Cardiac septum (tissue), 1 donor: ENCODE measurements at regions of chr11 and their contacts with region 1.

Region 1: GRCh38 chr11:67265633-67266423 is 445 bp upstream of the GRK2 start:
- DNase-seq: peak; percentile 93

Region 2: GRCh38 chr11:66835768-66836405 is 429.9 kb before region 1 on chr11:
- intact Hi-C with region 1: no loop called
- DNase-seq: no peak

Region 3: GRCh38 chr11:66904055-66904454 is 361.8 kb before region 1 on chr11:
- intact Hi-C with region 1: no loop called
- DNase-seq: no peak

Region 4: GRCh38 chr11:67288452-67289225 is 22.8 kb after region 1 on chr11:
- intact Hi-C with region 1: loop called (anchors 2 kb)
- DNase-seq: peak; percentile 96

Region 5: GRCh38 chr11:67303132-67303834 is 37.5 kb after region 1 on chr11 and contains the start of gene SSH3:
- intact Hi-C with region 1: loop called (anchors 5 kb)
- DNase-seq: peak; percentile 94
- total RNA-seq, gene SSH3: 22.3 TPM

Region 6: GRCh38 chr11:67332081-67332691 is 66.4 kb after region 1 on chr11:
- intact Hi-C with region 1: no loop called
- DNase-seq: no peak